Body of pancreas (tissue), 4 donors: ENCODE measurements at regions of chr10 and their contacts with region 1.

Region 1: DNA sequence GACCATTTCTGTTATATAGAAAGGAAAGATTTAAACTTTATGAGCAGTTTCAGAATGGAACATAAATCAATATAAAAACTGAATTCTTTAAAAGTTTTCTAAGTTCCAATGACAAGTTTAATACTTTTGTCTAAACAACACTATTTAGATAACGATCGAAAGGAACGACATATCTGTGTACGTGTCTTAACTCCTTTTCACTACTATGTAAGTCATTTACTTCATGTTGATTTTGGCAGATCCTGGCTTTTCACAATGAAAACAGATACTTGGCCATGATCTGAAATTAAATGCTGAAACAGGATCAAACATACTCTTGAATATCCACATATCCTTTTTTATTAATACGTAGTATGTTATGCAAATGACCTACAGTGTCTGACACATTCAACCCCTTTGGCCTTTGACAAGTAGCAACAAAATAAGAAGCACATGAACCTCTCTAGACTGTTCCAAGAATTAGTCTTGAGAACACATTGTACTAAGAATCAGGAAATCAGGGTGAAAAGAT is 41.9 kb downstream of the RNLS start:
- DNase-seq: no peak
- ATAC-seq: peak; percentile 69
- H3K4me3 ChIP-seq: no peak overlapping the region
- H3K27ac ChIP-seq: peak overlapping the region in 2 of 4 donors; percentile 18 to 48
- H3K4me1 ChIP-seq: peaks cover 21% of the 10 kb centered on the region
- H3K27me3 ChIP-seq: no peaks in the 10 kb centered on the region
- CTCF ChIP-seq: no peak
- POLR2A ChIP-seq: no peak

Region 2: DNA sequence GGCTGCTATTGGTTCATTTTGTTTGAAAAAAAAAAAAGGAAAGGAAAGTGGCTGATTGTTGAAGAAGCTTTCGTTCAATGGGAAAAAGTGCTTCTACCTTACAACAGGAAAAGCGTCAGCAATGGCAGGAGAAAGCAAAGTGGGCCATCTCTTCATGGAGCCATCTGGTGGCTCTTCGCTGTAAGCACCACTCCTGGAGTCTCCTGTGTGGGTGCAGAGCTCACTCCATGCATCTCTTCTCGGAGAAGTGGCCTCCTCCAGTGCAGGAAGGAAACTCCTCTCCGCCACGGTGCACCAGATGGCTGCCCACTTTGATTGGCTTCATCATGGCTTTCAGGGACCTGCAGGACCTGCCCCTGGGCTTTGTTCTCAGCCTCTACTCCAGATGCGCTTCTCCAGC is 426.8 kb before region 1 on chr10:
- intact Hi-C with region 1: loop called (anchors 10 kb)
- DNase-seq: peak; percentile 69 to 78 (median 76)
- ATAC-seq: peak; percentile 90
- H3K4me3 ChIP-seq: no peak overlapping the region
- H3K27ac ChIP-seq: no peak overlapping the region
- H3K4me1 ChIP-seq: peaks cover 10% of the 10 kb centered on the region
- H3K27me3 ChIP-seq: no peaks in the 10 kb centered on the region
- CTCF ChIP-seq: peak; percentile 57 to 78 (median 76)
- POLR2A ChIP-seq: no peak

Region 3: DNA sequence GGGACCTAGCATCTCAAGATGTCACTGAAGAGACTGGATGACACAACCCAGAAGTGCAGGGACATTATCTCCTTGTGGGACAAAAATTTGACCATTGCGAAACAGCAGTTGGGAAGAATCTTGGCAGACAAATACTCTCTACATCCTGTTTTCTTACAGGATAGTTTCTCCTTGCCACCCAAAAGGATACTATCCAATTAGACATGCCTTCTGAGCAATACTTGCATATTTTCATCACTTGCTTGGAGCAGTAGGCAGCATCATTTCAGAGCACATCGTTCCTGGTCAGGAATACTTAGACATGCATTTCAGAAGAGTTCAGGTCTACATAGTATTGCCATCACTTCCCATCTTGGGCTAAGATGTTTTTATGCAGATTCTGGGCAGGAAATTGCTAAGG is 506.2 kb after region 1 on chr10:
- intact Hi-C with region 1: no loop called
- DNase-seq: no peak
- ATAC-seq: peak; percentile 30
- H3K4me3 ChIP-seq: no peak overlapping the region
- H3K27ac ChIP-seq: no peak overlapping the region
- H3K4me1 ChIP-seq: no peaks in the 10 kb centered on the region
- H3K27me3 ChIP-seq: no peaks in the 10 kb centered on the region
- CTCF ChIP-seq: no peak
- POLR2A ChIP-seq: no peak